ENCODE measurements at regions of chr21 and their contacts with region 1.

Region 1: GRCh38 chr21:42956819-42957632 is 17.3 kb upstream of the PKNOX1 start:
- DNase-seq: peak; percentile 53 to 69
- H3K4me3 ChIP-seq: no peak overlapping the region
- H3K4me3 Mint-ChIP-seq: peak overlapping the region; percentile 25
- H3K27ac Mint-ChIP-seq: peak overlapping the region; percentile 91
- H3K4me1 ChIP-seq: peaks cover 27% of the 10 kb centered on the region
- H3K4me1 Mint-ChIP-seq: peaks cover 17% of the 10 kb centered on the region
- H3K27me3 ChIP-seq: no peaks in the 10 kb centered on the region
- H3K27me3 Mint-ChIP-seq: no peaks in the 10 kb centered on the region
- CTCF ChIP-seq: no peak

Region 2: DNA sequence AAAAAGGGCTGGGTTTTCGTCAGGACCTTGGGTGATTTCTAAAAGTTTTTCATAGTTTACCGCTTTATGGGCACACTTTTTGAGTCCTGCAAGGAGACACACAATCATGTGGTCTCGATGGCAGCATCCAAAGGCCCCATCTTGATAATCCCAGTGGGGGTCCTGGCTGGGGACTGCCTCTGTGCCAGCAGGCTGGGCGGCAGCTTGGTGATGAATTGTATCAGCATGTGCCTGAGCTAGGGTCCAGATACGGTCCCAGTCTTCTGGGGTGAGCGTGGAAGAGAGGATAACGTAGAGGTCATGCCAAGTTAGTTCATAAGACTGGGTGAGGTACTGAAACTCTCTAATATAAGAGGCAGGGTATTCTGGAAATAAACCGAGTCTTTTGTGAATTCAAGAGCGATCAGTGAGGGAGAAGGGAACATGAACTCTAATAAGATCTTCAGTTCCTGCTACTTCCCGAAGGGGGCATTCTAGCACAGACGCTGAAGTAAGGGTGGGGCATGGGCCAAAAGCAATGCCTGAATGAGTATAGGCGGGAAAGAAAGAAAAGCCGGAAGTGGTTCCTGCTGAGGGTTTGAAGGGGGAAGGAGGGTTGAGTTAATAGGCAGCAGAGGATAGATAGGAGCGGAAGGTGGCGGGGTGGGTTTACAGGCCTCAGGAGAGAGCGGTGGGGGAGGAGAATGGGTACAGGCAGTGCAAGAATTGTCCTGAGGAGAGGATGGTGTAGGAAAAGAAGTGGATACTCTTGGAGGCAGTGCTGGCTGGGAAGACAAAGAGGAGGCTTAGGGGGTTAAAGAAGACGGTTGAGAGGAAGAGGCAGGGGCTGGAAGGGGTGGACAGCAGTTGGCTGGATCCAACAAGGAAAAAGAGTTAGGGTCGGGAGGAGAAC is 33.2 kb before region 1 on chr21:
- CTCF ChIA-PET with region 1: no interaction called
- POLR2A ChIA-PET with region 1: interaction called, 4 read pairs
- intact Hi-C with region 1: loop called (anchors 1 kb)
- DNase-seq: peak; percentile 87 to 92
- H3K4me3 ChIP-seq: peak overlapping the region; percentile 28
- H3K4me3 Mint-ChIP-seq: peak overlapping the region; percentile 83
- H3K27ac Mint-ChIP-seq: peak overlapping the region; percentile 88
- H3K4me1 ChIP-seq: peaks cover 24% of the 10 kb centered on the region
- H3K4me1 Mint-ChIP-seq: peaks cover 11% of the 10 kb centered on the region
- H3K27me3 ChIP-seq: no peaks in the 10 kb centered on the region
- H3K27me3 Mint-ChIP-seq: no peaks in the 10 kb centered on the region
- CTCF ChIP-seq: peak; percentile 75 to 80

Region 3: GRCh38 chr21:42931576-42932258 is 25.3 kb before region 1 on chr21:
- CTCF ChIA-PET with region 1: interaction called, 3 read pairs
- POLR2A ChIA-PET with region 1: interaction called, 3 read pairs
- intact Hi-C with region 1: loop called (anchors 2 kb)
- DNase-seq: peak; percentile 24 to 44
- H3K4me3 ChIP-seq: peak overlapping the region; percentile 47
- H3K4me3 Mint-ChIP-seq: peak overlapping the region; percentile 97
- H3K27ac Mint-ChIP-seq: peak overlapping the region; percentile 99
- H3K4me1 ChIP-seq: peaks cover 45% of the 10 kb centered on the region
- H3K4me1 Mint-ChIP-seq: peaks cover 22% of the 10 kb centered on the region
- H3K27me3 ChIP-seq: no peaks in the 10 kb centered on the region
- H3K27me3 Mint-ChIP-seq: no peaks in the 10 kb centered on the region
- CTCF ChIP-seq: no peak

Region 4: GRCh38 chr21:42937960-42938605 is 18.9 kb before region 1 on chr21:
- CTCF ChIA-PET with region 1: interaction called, 3 read pairs
- POLR2A ChIA-PET with region 1: interaction called, 3 read pairs
- intact Hi-C with region 1: loop called (anchors 1 kb)
- DNase-seq: no peak
- H3K4me3 ChIP-seq: no peak overlapping the region
- H3K4me3 Mint-ChIP-seq: peak overlapping the region; percentile 72
- H3K27ac Mint-ChIP-seq: peak overlapping the region; percentile 83
- H3K4me1 ChIP-seq: peaks cover 59% of the 10 kb centered on the region
- H3K4me1 Mint-ChIP-seq: peaks cover 43% of the 10 kb centered on the region
- H3K27me3 ChIP-seq: no peaks in the 10 kb centered on the region
- H3K27me3 Mint-ChIP-seq: no peaks in the 10 kb centered on the region
- CTCF ChIP-seq: no peak

Region 5: DNA sequence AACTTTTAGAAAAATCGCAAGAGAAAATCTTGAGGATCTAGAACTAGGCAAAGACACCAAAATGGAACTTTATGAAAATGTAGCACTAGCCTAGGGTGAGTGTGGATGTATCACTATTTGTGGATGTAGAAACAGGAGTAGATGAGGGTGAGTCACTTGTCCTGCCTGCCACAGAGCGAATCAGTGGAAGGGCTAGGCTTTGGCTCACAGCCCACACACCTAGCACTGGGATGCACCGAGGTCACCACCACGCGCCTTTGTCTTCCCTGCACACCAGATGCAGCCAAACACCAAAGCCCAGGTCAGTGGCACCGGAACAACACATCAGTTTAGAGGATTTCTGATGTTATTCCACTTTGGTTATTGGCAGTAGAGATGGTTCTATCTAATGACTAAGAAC is 55.6 kb after region 1 on chr21:
- CTCF ChIA-PET with region 1: no interaction called
- POLR2A ChIA-PET with region 1: no interaction called
- intact Hi-C with region 1: no loop called
- DNase-seq: no peak
- H3K4me3 ChIP-seq: no peak overlapping the region
- H3K4me3 Mint-ChIP-seq: no peak overlapping the region
- H3K27ac Mint-ChIP-seq: no peak overlapping the region
- H3K4me1 ChIP-seq: peaks cover 1% of the 10 kb centered on the region
- H3K4me1 Mint-ChIP-seq: peaks cover under 1% of the 10 kb centered on the region
- H3K27me3 ChIP-seq: no peaks in the 10 kb centered on the region
- H3K27me3 Mint-ChIP-seq: no peaks in the 10 kb centered on the region
- CTCF ChIP-seq: no peak